ENCODE measurements at regions of chr15 and their contacts with region 1.

Region 1: GRCh38 chr15:94324117-94324826 is 92.9 kb downstream of the MCTP2 start:
- DNase-seq: peak; percentile 67
- H3K4me3 Mint-ChIP-seq: no peak overlapping the region
- H3K27ac Mint-ChIP-seq: no peak overlapping the region
- H3K4me1 Mint-ChIP-seq: peaks cover 23% of the 10 kb centered on the region
- H3K27me3 Mint-ChIP-seq: no peaks in the 10 kb centered on the region

Region 2: GRCh38 chr15:94163999-94164807 is 160.1 kb before region 1 on chr15:
- CTCF ChIA-PET with region 1: interaction called, 247 read pairs
- POLR2A ChIA-PET with region 1: interaction called, 28 read pairs
- DNase-seq: peak; percentile 69
- H3K4me3 Mint-ChIP-seq: no peak overlapping the region
- H3K27ac Mint-ChIP-seq: no peak overlapping the region
- H3K4me1 Mint-ChIP-seq: peaks cover 9% of the 10 kb centered on the region
- H3K27me3 Mint-ChIP-seq: peaks cover 11% of the 10 kb centered on the region

Region 3: DNA sequence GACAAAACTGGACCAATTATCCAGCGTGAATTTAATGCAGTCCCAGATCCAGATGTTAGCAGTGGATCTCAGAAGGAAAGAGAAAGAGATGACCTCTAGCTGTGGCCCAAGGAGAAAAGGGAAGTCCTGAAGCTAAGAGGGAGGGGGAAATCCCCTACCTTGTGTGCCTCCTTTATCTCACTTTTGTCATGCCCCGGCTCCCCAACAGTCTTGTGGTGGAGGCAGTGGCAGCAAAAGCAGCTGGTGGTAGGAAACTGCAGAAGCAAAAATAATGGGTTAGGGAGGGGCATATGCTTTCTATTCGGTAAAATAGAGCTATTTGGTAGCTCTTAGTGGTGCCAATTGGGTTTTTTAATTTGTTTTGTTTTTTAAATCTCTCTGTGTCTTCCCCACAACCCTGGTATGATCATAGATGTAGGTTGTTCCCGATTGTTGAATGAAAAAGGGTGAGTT is 36.5 kb before region 1 on chr15:
- CTCF ChIA-PET with region 1: interaction called, 20 read pairs
- POLR2A ChIA-PET with region 1: interaction called, 3 read pairs
- DNase-seq: peak; percentile 74
- H3K4me3 Mint-ChIP-seq: peak overlapping the region; percentile 63
- H3K27ac Mint-ChIP-seq: peak overlapping the region; percentile 85
- H3K4me1 Mint-ChIP-seq: peaks cover 51% of the 10 kb centered on the region
- H3K27me3 Mint-ChIP-seq: no peaks in the 10 kb centered on the region

Region 4: GRCh38 chr15:94306700-94307650 is 17.3 kb before region 1 on chr15:
- CTCF ChIA-PET with region 1: interaction called, 26 read pairs
- POLR2A ChIA-PET with region 1: interaction called, 14 read pairs
- DNase-seq: no peak
- H3K4me3 Mint-ChIP-seq: peak overlapping the region; percentile 15
- H3K27ac Mint-ChIP-seq: peak overlapping the region; percentile 83
- H3K4me1 Mint-ChIP-seq: peaks cover 62% of the 10 kb centered on the region
- H3K27me3 Mint-ChIP-seq: no peaks in the 10 kb centered on the region

Region 5: GRCh38 chr15:94335616-94336015 is 11.3 kb after region 1 on chr15:
- CTCF ChIA-PET with region 1: interaction called, 11 read pairs
- POLR2A ChIA-PET with region 1: no interaction called
- DNase-seq: no peak
- H3K4me3 Mint-ChIP-seq: no peak overlapping the region
- H3K27ac Mint-ChIP-seq: no peak overlapping the region
- H3K4me1 Mint-ChIP-seq: no peaks in the 10 kb centered on the region
- H3K27me3 Mint-ChIP-seq: no peaks in the 10 kb centered on the region

Region 6: DNA sequence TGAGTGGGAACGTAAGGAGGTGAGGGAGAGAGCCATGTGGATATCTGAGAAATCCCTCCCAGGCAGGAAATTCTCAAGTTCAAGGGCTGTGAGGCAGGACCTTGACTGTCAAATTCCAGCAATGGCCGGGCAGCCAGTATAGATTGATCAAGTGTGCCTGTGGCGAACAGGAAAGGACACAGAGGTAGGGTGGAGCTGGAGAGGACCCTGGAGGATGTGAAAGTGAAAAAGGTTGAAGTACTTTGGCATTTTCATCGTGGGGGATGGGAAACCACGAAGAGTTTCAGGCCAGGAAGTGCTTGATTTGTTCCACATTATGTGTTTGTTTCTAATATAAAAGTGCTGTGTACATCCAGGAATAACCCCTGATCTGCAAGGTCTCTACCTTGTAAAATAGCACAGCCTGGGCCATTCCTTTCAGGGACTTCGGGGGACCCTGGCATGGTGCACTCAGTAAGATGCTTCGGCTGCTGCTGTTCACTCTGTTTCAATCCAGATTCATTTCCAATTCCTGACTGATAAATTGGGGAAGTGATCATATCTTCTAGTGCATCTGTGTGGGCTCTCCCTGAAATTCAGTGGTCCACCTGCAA is 63.7 kb after region 1 on chr15:
- CTCF ChIA-PET with region 1: no interaction called
- POLR2A ChIA-PET with region 1: no interaction called
- DNase-seq: peak; percentile 32
- H3K4me3 Mint-ChIP-seq: no peak overlapping the region
- H3K27ac Mint-ChIP-seq: peak overlapping the region; percentile 64
- H3K4me1 Mint-ChIP-seq: peaks cover 26% of the 10 kb centered on the region
- H3K27me3 Mint-ChIP-seq: no peaks in the 10 kb centered on the region